Activated CD4-positive, alpha-beta memory T cell treated with anti-CD3 and anti-CD28 coated beads, Interleukin-2, amount 10 ng/mL, durations not matched to agents 7 days and 5 days (primary cell): ENCODE measurements at regions of chr11 and their contacts with region 1.

Region 1: DNA sequence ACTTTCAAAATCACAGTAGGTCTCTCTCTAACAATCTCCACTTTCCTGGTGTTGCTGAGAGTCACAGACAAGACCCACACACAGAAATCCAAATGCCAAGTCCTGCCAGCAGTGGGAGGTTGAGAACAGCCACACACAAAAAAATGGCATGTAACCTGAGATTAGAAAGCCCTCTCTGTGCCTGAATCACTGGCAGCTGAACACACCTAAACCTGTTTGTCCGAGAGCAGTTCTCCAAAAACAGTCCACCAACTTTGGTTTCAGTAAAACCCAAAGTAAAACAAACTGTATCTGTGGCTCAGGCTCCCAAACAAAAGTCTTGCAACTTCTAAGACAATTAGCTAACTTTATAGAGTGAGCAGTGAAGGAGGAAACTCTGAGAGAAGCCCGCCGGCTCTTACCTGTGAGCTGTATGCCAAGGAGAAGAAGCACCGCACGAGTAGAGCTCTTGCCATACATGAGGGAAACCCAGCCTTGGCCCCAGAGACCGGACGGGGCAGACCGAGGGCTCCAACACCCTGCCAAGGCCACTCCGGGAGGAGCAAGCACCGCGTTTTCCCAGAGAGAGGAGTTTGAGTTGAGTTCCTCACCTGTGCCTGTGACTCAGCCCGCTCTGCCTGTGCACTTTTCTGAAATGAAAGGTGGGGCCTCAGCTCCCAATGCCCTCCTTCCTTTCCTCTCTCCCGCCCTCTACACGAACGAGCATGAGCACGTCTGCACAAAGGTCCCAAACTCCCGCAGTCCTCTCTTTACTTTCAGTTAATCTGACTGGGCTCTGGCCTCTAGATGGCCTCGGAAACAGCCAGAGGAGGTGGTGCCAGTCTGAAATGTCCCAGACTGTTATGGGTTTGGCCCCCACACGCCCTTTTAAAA is at the start of gene MPZL2:
- DNase-seq: no peak
- H3K4me3 Mint-ChIP-seq: peak within 1 kb of the TSS; percentile 72
- H3K27ac Mint-ChIP-seq: no peak within 1 kb of the TSS
- H3K4me1 Mint-ChIP-seq: peaks cover 42% of the 10 kb centered on the region
- H3K27me3 Mint-ChIP-seq: peaks cover 10% of the 10 kb centered on the region
- total RNA-seq, gene MPZL2: 3.8 to 5.3 TPM

Region 2: DNA sequence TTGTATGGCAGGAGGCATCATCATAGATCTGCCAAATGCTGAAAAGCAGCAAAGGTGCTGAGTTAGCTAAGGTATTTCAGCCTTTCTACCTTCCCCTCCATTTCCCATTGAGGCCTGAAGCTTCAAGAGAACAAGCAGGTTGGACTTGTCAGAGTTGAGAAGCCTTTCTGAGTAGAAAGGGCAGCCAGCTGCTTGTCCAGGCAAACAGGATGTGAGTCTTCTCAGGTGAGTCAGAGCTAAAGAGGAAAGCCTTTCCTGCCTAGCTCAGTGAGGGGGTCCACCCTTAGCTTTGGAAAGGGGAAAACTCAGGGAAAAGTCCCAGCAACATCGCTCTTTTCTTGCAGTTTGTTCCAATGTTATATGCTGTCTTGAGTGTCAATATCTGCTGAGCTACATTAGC is 13.4 kb after region 1 on chr11:
- CTCF ChIA-PET with region 1: interaction called, 19 read pairs
- POLR2A ChIA-PET with region 1: interaction called, 8 read pairs
- DNase-seq: no peak
- H3K4me3 Mint-ChIP-seq: no peak overlapping the region
- H3K27ac Mint-ChIP-seq: peak overlapping the region; percentile 34
- H3K4me1 Mint-ChIP-seq: peaks cover 44% of the 10 kb centered on the region
- H3K27me3 Mint-ChIP-seq: peaks cover 2% of the 10 kb centered on the region